KBM-7 (cell line): ENCODE measurements at regions of chr5 and their contacts with region 1.

Region 1: GRCh38 chr5:74201334-74202081 is 439.0 kb downstream of the ENC1 start:
- DNase-seq: peak; percentile 58

Region 2: DNA sequence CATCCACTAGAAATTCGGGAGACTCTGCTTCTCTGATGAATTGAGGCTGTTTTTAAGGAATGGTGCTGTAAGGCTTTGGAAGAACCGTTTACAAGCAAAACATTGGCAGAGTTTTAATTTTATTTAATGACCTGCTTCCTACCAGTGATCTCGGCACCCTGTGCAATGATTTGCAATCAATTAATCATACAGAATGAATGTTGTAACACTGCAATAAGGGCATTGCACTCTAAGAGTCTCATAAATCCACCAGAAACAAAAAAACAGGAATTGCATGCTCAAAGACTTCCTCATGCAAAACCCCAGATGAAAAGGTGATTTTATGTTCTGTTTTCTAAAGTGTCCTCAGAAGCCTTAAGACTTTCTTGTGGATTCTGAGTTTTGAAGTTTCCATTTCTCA is 279.8 kb before region 1 on chr5:
- in situ Hi-C with region 1: no loop called
- DNase-seq: no peak

Region 3: DNA sequence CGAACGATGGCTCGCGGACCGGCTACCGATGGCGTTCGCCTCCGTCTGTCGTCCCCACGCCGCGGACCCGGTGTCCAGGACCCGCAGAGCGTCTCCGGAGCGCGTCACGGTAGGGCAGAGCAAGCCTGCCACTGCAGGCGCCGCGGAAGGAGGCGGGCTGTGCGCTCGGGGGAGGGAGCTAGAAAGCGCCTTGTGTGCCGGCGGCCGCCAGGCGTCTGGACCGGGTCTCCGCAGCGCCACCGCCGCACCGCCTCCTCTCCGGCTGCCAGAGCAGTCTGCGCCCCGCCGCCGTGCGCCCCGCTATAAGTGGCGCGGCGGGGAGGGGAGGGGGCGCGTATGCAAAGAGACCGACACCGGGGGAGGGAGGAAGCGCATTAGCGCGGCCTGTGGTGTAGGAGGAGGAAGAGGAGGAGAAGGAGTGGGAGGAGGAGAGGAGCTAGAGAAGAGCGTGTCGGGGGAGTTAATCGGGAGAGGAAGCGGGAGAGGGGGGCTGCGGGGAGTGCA is 439.0 kb after region 1 on chr5 and contains the start of gene ENC1:
- in situ Hi-C with region 1: loop called (anchors 25 kb)
- DNase-seq: peak; percentile 94